Heart right ventricle (tissue), 16 donors: ENCODE measurements at regions of chr17 and their contacts with region 1.

Region 1: GRCh38 chr17:59634632-59635541 is 15.2 kb downstream of the CLTC start:
- DNase-seq: no peak
- ATAC-seq: peak in 6 of 8 donors; percentile 48 to 66 (median 51)
- H3K4me3 ChIP-seq: no peak overlapping the region
- H3K27ac ChIP-seq: peak overlapping the region in 4 of 10 donors; percentile 13 to 73 (median 46)
- H3K4me1 ChIP-seq: peaks cover 4 to 95% (median 75%) of the 10 kb centered on the region in 9 donors
- H3K27me3 ChIP-seq: no peaks in the 10 kb centered on the region
- CTCF ChIP-seq: no peak

Region 2: GRCh38 chr17:59451706-59452105 is 183.2 kb before region 1 on chr17:
- intact Hi-C with region 1: no loop called
- DNase-seq: no peak
- ATAC-seq: no peak
- H3K4me3 ChIP-seq: no peak overlapping the region
- H3K27ac ChIP-seq: no peak overlapping the region
- H3K4me1 ChIP-seq: peaks cover 0 to 6% (median 0%) of the 10 kb centered on the region in 9 donors
- H3K27me3 ChIP-seq: no peaks in the 10 kb centered on the region
- CTCF ChIP-seq: no peak

Region 3: DNA sequence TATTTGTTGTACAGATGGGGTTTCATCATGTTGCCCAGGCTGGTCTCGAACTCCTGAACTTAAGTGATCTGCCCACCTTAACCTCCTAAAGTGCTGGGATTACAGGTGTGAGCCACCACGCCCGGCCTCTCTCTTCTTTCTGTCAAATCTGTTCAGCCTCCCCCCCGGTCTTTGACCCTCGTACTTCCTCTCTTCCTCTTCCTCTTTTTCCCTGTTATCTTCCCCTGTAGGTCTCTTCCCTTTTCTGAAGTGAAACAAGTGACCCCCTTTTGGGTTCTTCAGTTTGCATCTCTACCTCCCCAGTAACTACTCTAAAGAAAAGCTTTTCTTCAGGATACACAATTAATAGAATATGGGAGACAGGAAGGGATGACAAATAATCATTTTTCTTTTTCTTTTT is 101.2 kb before region 1 on chr17:
- intact Hi-C with region 1: no loop called
- DNase-seq: no peak
- ATAC-seq: no peak
- H3K4me3 ChIP-seq: no peak overlapping the region
- H3K27ac ChIP-seq: no peak overlapping the region
- H3K4me1 ChIP-seq: peaks cover 0 to 12% (median 0%) of the 10 kb centered on the region in 9 donors
- H3K27me3 ChIP-seq: no peaks in the 10 kb centered on the region
- CTCF ChIP-seq: no peak

Region 4: GRCh38 chr17:59676716-59677115 is 41.8 kb after region 1 on chr17:
- intact Hi-C with region 1: no loop called
- DNase-seq: no peak
- ATAC-seq: peak in 1 of 8 donors; percentile 14
- H3K4me3 ChIP-seq: no peak overlapping the region
- H3K27ac ChIP-seq: no peak overlapping the region
- H3K4me1 ChIP-seq: peaks cover 0 to 7% (median 0%) of the 10 kb centered on the region in 9 donors
- H3K27me3 ChIP-seq: no peaks in the 10 kb centered on the region
- CTCF ChIP-seq: no peak

Region 5: GRCh38 chr17:59846394-59847165 is 211.7 kb after region 1 on chr17:
- intact Hi-C with region 1: loop called in 1 of 10 experiments (anchors 10 kb)
- DNase-seq: no peak
- ATAC-seq: peak in 7 of 8 donors; percentile 14 to 53 (median 26)
- H3K4me3 ChIP-seq: peak overlapping the region in 2 of 10 donors; percentile 14 to 15
- H3K27ac ChIP-seq: peak overlapping the region; percentile 47 to 97 (median 71)
- H3K4me1 ChIP-seq: peaks cover 0 to 87% (median 36%) of the 10 kb centered on the region in 9 donors
- H3K27me3 ChIP-seq: no peaks in the 10 kb centered on the region
- CTCF ChIP-seq: no peak